AG04450 (cell line): ENCODE measurements at regions of chr9 and their contacts with region 1.

Region 1: GRCh38 chr9:16775330-16775729 is 95.1 kb downstream of the BNC2 start:
- DNase-seq: no peak
- H3K4me3 ChIP-seq: no peak overlapping the region
- H3K27ac ChIP-seq: no peak overlapping the region
- H3K27me3 ChIP-seq: no peaks in the 10 kb centered on the region
- CTCF ChIP-seq: no peak

Region 2: GRCh38 chr9:16458696-16459420 is 316.5 kb before region 1 on chr9:
- CTCF ChIA-PET with region 1: no interaction called
- POLR2A ChIA-PET with region 1: no interaction called
- DNase-seq: no peak
- H3K4me3 ChIP-seq: no peak overlapping the region
- H3K27ac ChIP-seq: peak overlapping the region; percentile 42
- H3K27me3 ChIP-seq: no peaks in the 10 kb centered on the region
- CTCF ChIP-seq: no peak

Region 3: DNA sequence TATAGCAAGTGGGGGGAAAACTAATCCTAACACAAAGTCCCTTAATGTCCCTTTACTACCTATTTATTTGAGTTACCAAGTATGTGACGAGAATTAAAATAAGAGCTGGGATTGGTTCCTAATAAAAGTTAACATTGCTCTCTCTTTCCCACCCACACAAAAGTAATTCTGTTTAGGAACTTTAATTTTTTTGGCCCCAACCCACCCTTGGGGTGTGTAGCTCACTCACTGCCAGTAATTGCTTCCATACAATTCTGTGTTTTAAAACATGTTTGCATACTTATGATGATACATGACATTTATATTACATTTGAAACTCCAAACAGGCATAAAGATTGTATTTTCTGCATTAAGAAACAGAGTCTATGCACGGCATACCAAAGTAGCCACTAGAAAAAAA is 11.4 kb before region 1 on chr9:
- CTCF ChIA-PET with region 1: interaction called, 12 read pairs
- POLR2A ChIA-PET with region 1: no interaction called
- DNase-seq: no peak
- H3K4me3 ChIP-seq: no peak overlapping the region
- H3K27ac ChIP-seq: no peak overlapping the region
- H3K27me3 ChIP-seq: no peaks in the 10 kb centered on the region
- CTCF ChIP-seq: no peak